ENCODE measurements at regions of chr12 and their contacts with region 1.

Region 1: DNA sequence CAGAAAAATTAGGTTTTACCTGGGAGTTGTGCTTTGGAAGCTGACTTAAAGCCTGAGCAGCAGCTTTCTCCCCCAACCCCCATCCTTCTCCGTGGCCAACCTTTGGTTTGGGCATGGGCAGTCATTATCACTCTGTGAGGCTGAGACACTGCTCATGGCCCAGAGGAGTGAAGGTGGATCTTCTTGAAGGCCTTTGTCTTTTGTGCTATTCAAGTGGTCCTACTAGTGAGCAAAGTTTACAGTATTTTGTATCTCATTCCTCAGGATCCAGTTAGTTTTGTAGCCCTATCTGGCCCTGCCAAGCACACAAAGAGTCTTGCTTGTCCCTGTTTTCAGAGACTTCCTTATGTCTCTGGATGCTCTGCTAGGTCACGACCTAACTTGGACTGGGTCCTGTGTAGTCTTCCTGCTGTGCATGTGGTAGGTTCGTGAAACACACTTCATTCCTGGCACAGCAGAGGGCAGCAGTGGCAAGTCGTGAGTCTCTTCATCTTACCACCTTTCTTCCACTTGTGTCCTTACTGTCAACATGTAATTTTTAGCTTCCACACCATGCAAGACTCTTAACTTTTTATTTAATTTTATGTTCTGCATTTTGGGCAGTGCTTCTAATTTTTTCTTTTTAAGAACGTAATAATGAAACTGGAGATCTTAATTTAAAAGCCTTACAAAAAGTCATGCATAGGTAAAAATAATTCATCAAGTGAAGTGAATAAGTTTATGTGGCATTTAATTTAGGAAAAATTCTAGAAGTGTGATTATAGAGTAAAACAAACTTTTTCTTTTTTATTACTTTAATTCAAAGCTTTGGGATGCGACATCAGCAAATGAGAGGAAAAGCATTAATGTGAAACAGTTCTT is 53.7 kb downstream of the APAF1 start:
- DNase-seq: peak; percentile 73
- H3K4me3 Mint-ChIP-seq: no peak overlapping the region
- H3K27ac Mint-ChIP-seq: no peak overlapping the region
- H3K4me1 Mint-ChIP-seq: peaks cover 5% of the 10 kb centered on the region
- H3K27me3 Mint-ChIP-seq: no peaks in the 10 kb centered on the region
- CTCF ChIP-seq: peak; percentile 73

Region 2: GRCh38 chr12:98714426-98714825 is 15.6 kb after region 1 on chr12:
- CTCF ChIA-PET with region 1: interaction called, 19 read pairs
- POLR2A ChIA-PET with region 1: no interaction called
- intact Hi-C with region 1: no loop called
- DNase-seq: no peak
- H3K4me3 Mint-ChIP-seq: no peak overlapping the region
- H3K27ac Mint-ChIP-seq: peak overlapping the region; percentile 16
- H3K4me1 Mint-ChIP-seq: no peaks in the 10 kb centered on the region
- H3K27me3 Mint-ChIP-seq: no peaks in the 10 kb centered on the region
- CTCF ChIP-seq: no peak

Region 3: DNA sequence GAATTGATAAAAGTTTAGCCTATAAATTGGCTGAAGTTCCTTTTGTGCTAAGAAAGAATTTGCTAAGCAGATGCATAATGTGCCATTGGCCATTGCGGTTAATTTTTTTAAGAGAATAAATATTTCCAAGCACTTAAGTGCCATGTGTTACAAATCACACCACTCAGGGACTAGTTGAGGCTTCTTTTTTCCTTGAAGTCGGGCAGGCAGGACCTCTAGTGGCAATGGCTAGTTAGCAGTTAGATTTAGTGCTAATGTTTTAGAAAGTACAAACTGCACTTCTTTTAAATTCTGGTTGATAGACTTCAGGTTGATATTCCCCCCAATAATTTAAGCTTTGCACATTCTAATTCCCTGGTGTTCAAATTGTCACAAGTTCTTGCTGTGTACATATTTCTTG is 240.5 kb after region 1 on chr12:
- CTCF ChIA-PET with region 1: no interaction called
- POLR2A ChIA-PET with region 1: interaction called, 3 read pairs
- intact Hi-C with region 1: loop called (anchors 1 kb)
- DNase-seq: peak; percentile 42
- H3K4me3 Mint-ChIP-seq: no peak overlapping the region
- H3K27ac Mint-ChIP-seq: no peak overlapping the region
- H3K4me1 Mint-ChIP-seq: no peaks in the 10 kb centered on the region
- H3K27me3 Mint-ChIP-seq: no peaks in the 10 kb centered on the region
- CTCF ChIP-seq: peak; percentile 38

Region 4: GRCh38 chr12:98990673-98991072 is 291.8 kb after region 1 on chr12:
- CTCF ChIA-PET with region 1: interaction called, 72 read pairs
- POLR2A ChIA-PET with region 1: no interaction called
- intact Hi-C with region 1: no loop called
- DNase-seq: no peak
- H3K4me3 Mint-ChIP-seq: no peak overlapping the region
- H3K27ac Mint-ChIP-seq: no peak overlapping the region
- H3K4me1 Mint-ChIP-seq: no peaks in the 10 kb centered on the region
- H3K27me3 Mint-ChIP-seq: no peaks in the 10 kb centered on the region
- CTCF ChIP-seq: no peak

Region 5: DNA sequence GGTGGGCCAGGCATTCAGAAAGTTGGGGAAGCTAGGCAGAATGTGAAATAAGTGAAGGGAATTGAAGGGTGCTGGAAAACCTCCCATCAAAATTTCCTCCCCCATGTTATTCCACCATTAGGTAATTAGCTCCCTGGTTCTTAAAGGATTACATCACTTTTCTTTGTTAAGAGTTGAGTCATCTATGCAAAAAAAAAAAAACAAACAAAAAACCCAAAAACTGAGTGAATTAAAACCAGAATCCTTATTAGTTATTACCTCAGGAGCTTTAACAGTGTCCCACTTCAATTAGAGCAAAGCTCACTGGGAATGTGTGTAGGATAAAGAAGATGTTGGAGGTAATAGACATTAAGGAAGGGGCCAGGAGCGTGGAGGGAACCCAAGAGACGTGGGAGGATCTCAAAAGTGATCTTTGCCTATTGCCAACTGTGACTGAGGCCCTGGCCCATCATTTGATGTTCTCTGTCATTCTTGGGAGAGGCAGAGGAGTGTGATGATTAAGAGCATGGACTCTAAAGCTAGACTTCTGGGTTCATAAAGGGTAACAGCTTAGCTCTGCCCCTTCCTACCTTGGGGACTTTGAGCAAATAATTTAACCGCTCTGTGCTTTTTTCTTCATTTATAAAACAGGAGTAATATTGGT is 310.9 kb after region 1 on chr12:
- CTCF ChIA-PET with region 1: interaction called, 20 read pairs
- POLR2A ChIA-PET with region 1: no interaction called
- intact Hi-C with region 1: no loop called
- DNase-seq: peak; percentile 33
- H3K4me3 Mint-ChIP-seq: no peak overlapping the region
- H3K27ac Mint-ChIP-seq: no peak overlapping the region
- H3K4me1 Mint-ChIP-seq: peaks cover 7% of the 10 kb centered on the region
- H3K27me3 Mint-ChIP-seq: no peaks in the 10 kb centered on the region
- CTCF ChIP-seq: no peak

Measured in MCF 10A (cell line).